ENCODE measurements at regions of chr10 and their contacts with region 1.

Region 1: GRCh38 chr10:72331601-72332422 is 22.9 kb downstream of the DNAJB12 start:
- DNase-seq: peak; percentile 84
- H3K4me3 Mint-ChIP-seq: peak overlapping the region; percentile 76
- H3K27ac Mint-ChIP-seq: peak overlapping the region; percentile 99
- H3K4me1 Mint-ChIP-seq: peaks cover 76% of the 10 kb centered on the region
- H3K27me3 Mint-ChIP-seq: no peaks in the 10 kb centered on the region

Region 2: DNA sequence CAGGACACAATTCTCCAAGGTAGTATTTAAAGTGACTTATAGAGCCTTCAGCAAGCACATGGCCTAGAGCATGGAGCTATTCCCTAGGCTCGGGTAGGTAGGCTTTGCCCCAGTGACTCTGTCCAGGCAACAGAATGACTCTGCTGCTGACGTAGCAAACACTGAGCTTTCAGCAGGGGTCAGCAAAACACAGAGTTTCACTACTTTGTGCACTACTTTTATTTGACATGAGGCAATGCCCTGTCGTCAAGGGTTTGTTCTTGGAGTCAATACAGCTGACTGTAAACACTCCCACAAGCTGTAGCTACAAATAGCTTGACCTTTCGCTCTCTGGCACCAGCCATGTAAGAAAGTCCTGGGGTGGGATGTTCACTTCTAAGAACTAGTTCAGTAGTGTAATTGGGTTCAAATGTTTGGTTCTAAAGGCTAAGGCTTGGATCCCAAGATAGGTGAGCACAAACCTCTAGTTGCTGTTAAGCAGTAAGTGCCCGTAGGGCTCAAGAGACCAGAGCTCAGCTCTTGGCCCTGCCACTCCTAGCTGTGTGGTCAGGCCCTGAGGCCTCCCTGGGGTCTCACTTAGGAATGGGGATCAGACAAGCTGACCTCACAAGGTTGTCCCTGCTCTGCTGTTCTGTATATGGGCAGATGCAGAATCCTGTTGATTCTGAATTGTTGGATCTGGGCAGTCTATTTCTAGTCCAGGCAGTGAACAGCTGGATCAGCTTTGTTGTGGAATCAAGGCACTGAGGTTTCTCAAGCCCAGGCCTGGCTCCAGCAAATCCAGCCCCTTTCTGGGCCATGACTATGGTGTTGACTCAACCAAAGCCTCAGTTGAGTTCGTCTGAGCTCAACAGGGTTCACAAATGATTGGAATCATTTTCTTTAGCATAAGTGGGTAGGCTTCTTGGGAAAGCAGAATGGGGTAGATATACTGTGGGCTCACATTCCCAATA is 1901.0 kb before region 1 on chr10:
- intact Hi-C with region 1: no loop called
- DNase-seq: no peak
- H3K4me3 Mint-ChIP-seq: no peak overlapping the region
- H3K27ac Mint-ChIP-seq: no peak overlapping the region
- H3K4me1 Mint-ChIP-seq: peaks cover 10% of the 10 kb centered on the region
- H3K27me3 Mint-ChIP-seq: no peaks in the 10 kb centered on the region

Region 3: GRCh38 chr10:71319042-71319799 is 1012.6 kb before region 1 on chr10 and contains the start of gene SLC29A3:
- intact Hi-C with region 1: loop called (anchors 10 kb)
- DNase-seq: peak; percentile 86
- H3K4me3 Mint-ChIP-seq: peak within 1 kb of the TSS; percentile 99
- H3K27ac Mint-ChIP-seq: peak within 1 kb of the TSS; percentile 91
- H3K4me1 Mint-ChIP-seq: peaks cover 39% of the 10 kb centered on the region
- H3K27me3 Mint-ChIP-seq: no peaks in the 10 kb centered on the region
- total RNA-seq, gene SLC29A3: 7.2 and 7.3 TPM in 2 replicates

Region 4: DNA sequence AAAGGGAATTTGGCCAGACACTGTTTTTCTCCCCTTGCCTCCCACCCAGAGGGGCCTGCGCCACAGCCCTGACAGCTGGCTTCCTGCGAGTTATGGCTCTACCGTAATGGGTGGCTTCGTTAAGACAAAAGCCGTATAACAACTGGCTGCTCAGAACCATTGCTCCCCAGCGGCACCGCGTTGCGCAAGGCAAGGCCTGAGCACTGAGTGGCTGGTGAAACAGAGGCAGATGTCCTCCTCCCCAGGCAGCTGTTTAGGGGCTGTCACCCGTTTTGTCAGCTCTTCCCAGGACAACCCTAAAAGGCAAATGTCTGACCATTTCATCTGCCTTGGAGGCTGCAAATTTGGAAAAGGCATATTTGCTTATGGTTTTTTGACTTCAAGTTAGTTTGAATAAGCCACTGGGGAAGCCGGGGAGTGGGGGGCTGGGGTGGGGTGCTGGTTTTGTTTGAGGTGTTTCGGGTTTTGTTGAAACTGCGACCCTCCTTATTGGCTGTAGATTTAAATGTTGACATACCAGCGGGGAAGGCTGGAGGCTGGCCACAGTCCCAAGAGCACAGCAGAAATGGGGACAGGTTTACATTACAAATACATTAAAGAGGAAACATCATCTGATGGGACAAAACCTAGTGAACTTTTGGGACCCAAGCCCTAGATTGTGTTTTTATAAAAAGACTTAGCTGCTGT is 242.8 kb before region 1 on chr10:
- intact Hi-C with region 1: loop called (anchors 2 kb)
- DNase-seq: peak; percentile 35
- H3K4me3 Mint-ChIP-seq: peak overlapping the region; percentile 99
- H3K27ac Mint-ChIP-seq: peak overlapping the region; percentile 99
- H3K4me1 Mint-ChIP-seq: peaks cover 49% of the 10 kb centered on the region
- H3K27me3 Mint-ChIP-seq: no peaks in the 10 kb centered on the region

Region 5: DNA sequence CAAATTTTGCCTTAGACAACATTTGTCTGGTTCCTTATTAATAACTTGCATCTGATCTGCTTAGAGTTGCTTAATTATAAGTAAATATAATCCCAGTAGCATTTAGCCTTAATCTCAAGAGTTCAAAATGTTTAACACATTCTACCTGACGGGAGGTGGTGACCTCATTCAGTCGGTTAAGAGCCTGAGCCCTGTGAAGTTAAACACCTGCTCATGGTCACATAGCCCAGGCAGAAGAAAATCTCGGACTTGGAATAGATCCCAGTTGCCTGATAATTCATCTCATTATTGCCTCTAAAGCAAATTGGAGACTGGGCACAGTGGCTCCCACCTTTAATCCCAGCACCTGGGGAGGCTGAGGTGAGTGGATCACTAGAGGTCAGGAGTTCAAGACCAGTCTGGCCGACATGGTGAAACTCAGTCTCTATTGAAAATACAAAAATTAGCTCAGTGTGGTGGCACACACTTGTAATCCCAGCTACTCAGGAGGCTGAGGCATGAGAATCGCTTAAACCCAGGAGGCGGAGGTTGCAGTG is 97.2 kb before region 1 on chr10:
- intact Hi-C with region 1: no loop called
- DNase-seq: no peak
- H3K4me3 Mint-ChIP-seq: no peak overlapping the region
- H3K27ac Mint-ChIP-seq: no peak overlapping the region
- H3K4me1 Mint-ChIP-seq: peaks cover 4% of the 10 kb centered on the region
- H3K27me3 Mint-ChIP-seq: no peaks in the 10 kb centered on the region

Region 6: DNA sequence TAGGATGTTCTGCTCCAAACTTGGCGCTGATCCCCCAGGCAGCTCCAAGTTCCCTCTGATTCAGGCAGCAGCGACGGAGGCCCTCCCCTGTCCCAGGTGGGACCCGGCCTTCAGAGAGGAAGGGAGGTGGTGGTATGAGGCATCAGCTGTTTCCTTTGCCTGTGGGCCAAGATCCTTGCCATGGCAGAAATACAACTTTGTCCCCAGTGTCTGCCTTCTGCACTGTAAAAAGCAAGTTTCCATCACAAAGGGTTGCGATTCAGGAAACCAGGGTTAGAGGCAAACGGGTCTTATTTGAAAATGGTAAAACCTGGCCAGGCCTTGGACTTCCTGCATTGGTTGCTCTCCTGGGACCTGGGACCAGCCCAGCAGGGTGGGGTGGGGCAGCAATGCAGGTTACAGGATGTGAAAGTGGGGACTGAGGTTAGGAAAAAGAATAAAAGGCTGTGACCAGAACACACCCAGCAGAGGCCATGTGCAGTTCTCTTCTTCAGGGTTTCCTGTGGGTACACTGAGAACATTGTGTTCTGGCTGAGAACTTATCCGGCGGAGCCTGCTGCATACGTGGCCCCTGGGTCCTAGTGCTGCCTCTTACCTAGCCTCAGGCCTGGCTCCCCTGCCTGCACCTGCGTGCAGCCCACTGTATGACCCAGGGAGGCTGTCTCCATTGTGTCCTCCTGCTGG is 83.2 kb before region 1 on chr10:
- intact Hi-C with region 1: loop called (anchors 2 kb)
- DNase-seq: peak; percentile 80
- H3K4me3 Mint-ChIP-seq: peak overlapping the region; percentile 69
- H3K27ac Mint-ChIP-seq: peak overlapping the region; percentile 97
- H3K4me1 Mint-ChIP-seq: peaks cover 64% of the 10 kb centered on the region
- H3K27me3 Mint-ChIP-seq: no peaks in the 10 kb centered on the region

Region 7: GRCh38 chr10:72273410-72274212 is 58.2 kb before region 1 on chr10 and contains the start of gene DDIT4:
- intact Hi-C with region 1: loop called (anchors 1 kb)
- DNase-seq: peak; percentile 99
- H3K4me3 Mint-ChIP-seq: peak within 1 kb of the TSS; percentile 100
- H3K27ac Mint-ChIP-seq: peak within 1 kb of the TSS; percentile 94
- H3K4me1 Mint-ChIP-seq: peaks cover 43% of the 10 kb centered on the region
- H3K27me3 Mint-ChIP-seq: no peaks in the 10 kb centered on the region
- total RNA-seq, gene DDIT4: 543 and 569 TPM in 2 replicates

Region 8: DNA sequence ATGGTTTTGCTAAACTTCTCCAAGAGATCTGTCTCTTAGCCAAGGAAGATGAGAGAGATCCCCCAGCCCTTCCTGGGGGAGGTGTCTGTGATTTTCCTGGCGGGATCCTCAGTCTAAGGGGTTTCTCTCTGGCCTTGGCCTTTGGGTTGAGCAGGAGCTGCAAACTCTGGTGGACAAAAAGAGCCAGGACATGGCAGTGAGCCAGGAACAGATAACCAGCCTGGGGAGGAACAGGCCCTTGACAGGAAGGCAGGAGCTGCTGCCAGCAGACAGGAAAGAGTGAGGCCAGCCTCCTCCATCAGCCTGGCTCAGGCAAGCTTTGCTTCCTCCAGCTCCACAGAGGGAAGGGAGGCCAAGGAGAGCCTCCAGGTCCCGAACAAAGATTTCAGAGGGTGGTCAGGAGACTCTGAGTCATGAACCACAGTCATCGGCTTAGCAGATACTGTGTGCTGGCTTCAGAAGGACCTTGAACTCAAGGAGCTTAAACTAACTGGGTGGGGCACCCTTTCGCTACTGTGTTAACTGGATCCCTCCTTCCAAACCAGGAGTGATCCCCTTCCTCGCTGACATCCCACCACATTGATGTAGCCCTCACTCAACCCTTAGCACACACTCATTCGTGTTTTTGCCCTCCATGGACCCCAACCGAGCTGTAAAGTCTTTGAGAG is 23.4 kb before region 1 on chr10:
- intact Hi-C with region 1: loop called (anchors 1 kb)
- DNase-seq: no peak
- H3K4me3 Mint-ChIP-seq: no peak overlapping the region
- H3K27ac Mint-ChIP-seq: peak overlapping the region; percentile 86
- H3K4me1 Mint-ChIP-seq: peaks cover 58% of the 10 kb centered on the region
- H3K27me3 Mint-ChIP-seq: no peaks in the 10 kb centered on the region

Region 9: GRCh38 chr10:72821606-72822005 is 489.8 kb after region 1 on chr10:
- intact Hi-C with region 1: no loop called
- DNase-seq: no peak
- H3K4me3 Mint-ChIP-seq: no peak overlapping the region
- H3K27ac Mint-ChIP-seq: no peak overlapping the region
- H3K4me1 Mint-ChIP-seq: peaks cover 3% of the 10 kb centered on the region
- H3K27me3 Mint-ChIP-seq: no peaks in the 10 kb centered on the region